CD4-positive, alpha-beta memory T cell (primary cell): ENCODE measurements at regions of chr3 and their contacts with region 1.

Region 1: DNA sequence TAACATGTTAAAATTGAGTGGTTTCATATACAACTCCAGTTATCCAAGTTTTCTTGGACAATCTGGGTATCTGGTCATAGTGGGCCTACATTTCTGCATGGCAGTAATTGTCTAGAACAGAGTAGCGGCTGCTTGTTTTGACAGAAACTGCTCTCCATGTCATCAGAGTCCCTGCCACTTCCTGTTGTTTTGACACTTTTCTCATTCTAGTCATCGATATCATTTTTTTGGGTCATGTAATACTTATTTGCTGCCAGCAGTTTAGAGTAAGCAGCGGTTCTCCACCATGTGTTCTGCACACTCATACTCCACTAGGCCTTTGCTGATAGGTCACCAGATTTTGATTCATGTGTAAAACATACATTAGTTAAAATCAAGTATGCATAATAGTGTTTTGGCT is 81.5 kb downstream of the SLC25A26 start:
- DNase-seq: peak; percentile 81 to 88 (median 83)
- H3K4me3 ChIP-seq: no peak overlapping the region
- H3K4me3 Mint-ChIP-seq: peak overlapping the region in 7 of 8 donors; percentile 11 to 79 (median 68)
- H3K27ac ChIP-seq: peak overlapping the region; percentile 73
- H3K27ac Mint-ChIP-seq: peak overlapping the region in 3 of 7 donors; percentile 97 to 99 (median 98)
- H3K4me1 ChIP-seq: peaks cover 93% of the 10 kb centered on the region
- H3K4me1 Mint-ChIP-seq: peaks cover 22 to 71% (median 43%) of the 10 kb centered on the region in 4 donors
- H3K27me3 ChIP-seq: no peaks in the 10 kb centered on the region
- H3K27me3 Mint-ChIP-seq: no peaks in the 10 kb centered on the region

Region 2: DNA sequence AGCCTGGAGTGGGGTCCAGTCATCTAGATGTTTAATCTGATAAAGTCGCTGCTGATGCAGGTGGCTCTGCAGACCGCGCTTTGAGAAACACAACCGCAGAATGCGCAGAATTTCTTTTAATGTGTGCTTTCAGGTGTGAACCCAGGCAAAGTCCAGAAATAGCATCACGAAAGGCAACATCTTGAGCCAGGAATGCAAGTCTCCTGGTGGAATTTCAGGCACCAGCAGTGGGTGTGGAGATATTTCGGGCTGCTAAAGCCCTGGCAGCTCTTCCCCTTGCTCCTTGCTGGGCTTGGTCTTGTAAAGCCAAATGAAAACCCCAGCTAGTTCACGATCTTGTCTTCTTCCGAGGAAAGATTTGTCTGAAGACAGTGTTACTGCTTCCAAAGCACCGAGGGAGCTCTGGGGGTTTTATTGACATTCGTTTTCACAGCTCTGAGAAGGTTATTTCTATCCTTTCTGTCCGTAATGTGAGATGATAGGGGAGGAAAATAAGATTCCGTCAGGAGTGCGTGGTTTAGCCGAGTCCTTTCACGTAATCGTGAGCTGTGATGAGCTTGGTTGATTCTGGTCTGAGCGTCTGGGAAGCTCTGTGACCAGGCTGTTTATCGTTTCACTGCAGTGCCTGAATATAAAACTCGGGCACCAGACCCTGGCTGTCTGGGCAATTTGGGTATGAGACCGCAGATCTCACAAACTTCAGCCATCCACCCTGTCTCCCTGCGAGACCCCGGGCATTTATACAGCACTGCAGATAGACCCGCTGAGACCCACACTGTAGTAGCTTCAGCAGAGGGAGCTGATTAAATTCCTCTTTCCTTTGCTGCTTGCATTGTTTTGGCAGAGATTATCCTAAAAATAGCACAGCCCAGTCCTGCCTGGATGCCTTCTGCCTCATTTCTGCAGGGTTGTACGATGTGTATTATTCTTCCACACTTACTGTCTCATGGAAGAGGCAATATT is 148.5 kb before region 1 on chr3:
- CTCF ChIA-PET with region 1: no interaction called
- POLR2A ChIA-PET with region 1: no interaction called
- intact Hi-C with region 1: no loop called
- DNase-seq: no peak
- H3K4me3 ChIP-seq: no peak overlapping the region
- H3K4me3 Mint-ChIP-seq: no peak overlapping the region
- H3K27ac ChIP-seq: no peak overlapping the region
- H3K27ac Mint-ChIP-seq: no peak overlapping the region
- H3K4me1 ChIP-seq: no peaks in the 10 kb centered on the region
- H3K4me1 Mint-ChIP-seq: no peaks in the 10 kb centered on the region
- H3K27me3 ChIP-seq: no peaks in the 10 kb centered on the region
- H3K27me3 Mint-ChIP-seq: peaks cover 4 to 5% of the 10 kb centered on the region in 2 donors

Region 3: GRCh38 chr3:66220602-66221377 is 81.5 kb before region 1 on chr3 and contains the start of gene SLC25A26:
- CTCF ChIA-PET with region 1: no interaction called
- POLR2A ChIA-PET with region 1: interaction called, 3 read pairs
- intact Hi-C with region 1: loop called (anchors 1 kb)
- DNase-seq: peak; percentile 96 to 100 (median 98)
- H3K4me3 ChIP-seq: peak within 1 kb of the TSS; percentile 67 to 82
- H3K4me3 Mint-ChIP-seq: peak within 1 kb of the TSS; percentile 87 to 99 (median 92)
- H3K27ac ChIP-seq: peak within 1 kb of the TSS; percentile 73
- H3K27ac Mint-ChIP-seq: peak within 1 kb of the TSS; percentile 76 to 99 (median 91)
- H3K4me1 ChIP-seq: peaks cover 15% of the 10 kb centered on the region
- H3K4me1 Mint-ChIP-seq: peaks cover 16 to 44% (median 32%) of the 10 kb centered on the region in 4 donors
- H3K27me3 ChIP-seq: no peaks in the 10 kb centered on the region
- H3K27me3 Mint-ChIP-seq: no peaks in the 10 kb centered on the region
- total RNA-seq, gene SLC25A26: 18.9 to 21.1 TPM

Region 4: GRCh38 chr3:66276705-66277274 is 25.5 kb before region 1 on chr3:
- CTCF ChIA-PET with region 1: interaction called, 13 read pairs
- POLR2A ChIA-PET with region 1: interaction called, 32 read pairs
- intact Hi-C with region 1: loop called (anchors 2 kb)
- DNase-seq: peak; percentile 71 to 75 (median 73)
- H3K4me3 ChIP-seq: no peak overlapping the region
- H3K4me3 Mint-ChIP-seq: no peak overlapping the region
- H3K27ac ChIP-seq: no peak overlapping the region
- H3K27ac Mint-ChIP-seq: peak overlapping the region; percentile 6 to 86 (median 71)
- H3K4me1 ChIP-seq: peaks cover 34% of the 10 kb centered on the region
- H3K4me1 Mint-ChIP-seq: peaks cover 25 to 45% (median 34%) of the 10 kb centered on the region in 4 donors
- H3K27me3 ChIP-seq: no peaks in the 10 kb centered on the region
- H3K27me3 Mint-ChIP-seq: no peaks in the 10 kb centered on the region

Region 5: GRCh38 chr3:66344848-66345578 is 42.7 kb after region 1 on chr3:
- CTCF ChIA-PET with region 1: no interaction called
- POLR2A ChIA-PET with region 1: no interaction called
- intact Hi-C with region 1: loop called (anchors 5 kb)
- DNase-seq: no peak
- H3K4me3 ChIP-seq: no peak overlapping the region
- H3K4me3 Mint-ChIP-seq: no peak overlapping the region
- H3K27ac ChIP-seq: no peak overlapping the region
- H3K27ac Mint-ChIP-seq: peak overlapping the region in 5 of 7 donors; percentile 26 to 89 (median 41)
- H3K4me1 ChIP-seq: no peaks in the 10 kb centered on the region
- H3K4me1 Mint-ChIP-seq: peaks cover 2 to 11% (median 4%) of the 10 kb centered on the region in 4 donors
- H3K27me3 ChIP-seq: no peaks in the 10 kb centered on the region
- H3K27me3 Mint-ChIP-seq: no peaks in the 10 kb centered on the region

Region 6: GRCh38 chr3:66355394-66355793 is 53.1 kb after region 1 on chr3:
- CTCF ChIA-PET with region 1: interaction called, 3 read pairs
- POLR2A ChIA-PET with region 1: interaction called, 12 read pairs
- intact Hi-C with region 1: no loop called
- DNase-seq: no peak
- H3K4me3 ChIP-seq: no peak overlapping the region
- H3K4me3 Mint-ChIP-seq: no peak overlapping the region
- H3K27ac ChIP-seq: no peak overlapping the region
- H3K27ac Mint-ChIP-seq: no peak overlapping the region
- H3K4me1 ChIP-seq: peaks cover 22% of the 10 kb centered on the region
- H3K4me1 Mint-ChIP-seq: peaks cover 0 to 17% (median 13%) of the 10 kb centered on the region in 4 donors
- H3K27me3 ChIP-seq: no peaks in the 10 kb centered on the region
- H3K27me3 Mint-ChIP-seq: no peaks in the 10 kb centered on the region

Region 7: DNA sequence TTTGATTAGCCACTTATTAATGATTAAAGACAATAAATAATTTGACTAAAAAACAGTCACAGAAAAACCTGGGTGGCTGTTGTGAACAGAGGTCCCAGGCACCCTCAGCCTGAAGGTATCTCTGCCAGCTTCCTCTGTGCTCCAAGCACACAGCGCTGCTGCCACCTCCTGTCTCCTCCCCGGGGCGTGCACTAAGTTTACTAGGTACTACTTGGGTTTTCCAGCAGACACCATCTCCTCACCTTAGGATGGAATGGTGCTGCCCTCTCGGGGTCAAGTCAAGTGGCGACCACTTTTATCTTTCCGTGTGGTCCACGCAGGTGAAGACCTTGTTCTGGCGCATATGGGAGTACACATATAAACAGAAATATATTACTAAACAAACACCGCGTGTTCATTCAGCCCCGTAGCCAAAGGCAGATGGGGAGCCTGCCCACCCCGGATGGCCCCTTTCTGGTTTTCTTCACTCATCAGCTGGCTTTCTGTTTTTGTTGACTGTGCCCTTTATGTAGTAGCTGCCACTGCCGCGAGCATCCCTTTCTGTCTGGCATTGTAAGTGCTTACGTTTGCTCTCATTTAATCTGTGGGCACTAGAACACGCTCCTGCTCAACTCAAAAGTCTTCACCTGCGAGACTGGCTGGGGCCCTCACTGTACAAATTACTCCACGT is 70.5 kb after region 1 on chr3:
- CTCF ChIA-PET with region 1: interaction called, 32 read pairs
- POLR2A ChIA-PET with region 1: interaction called, 38 read pairs
- intact Hi-C with region 1: loop called (anchors 1 kb)
- DNase-seq: peak; percentile 35 to 56 (median 44)
- H3K4me3 ChIP-seq: no peak overlapping the region
- H3K4me3 Mint-ChIP-seq: no peak overlapping the region
- H3K27ac ChIP-seq: no peak overlapping the region
- H3K27ac Mint-ChIP-seq: peak overlapping the region in 6 of 7 donors; percentile 36 to 82 (median 74)
- H3K4me1 ChIP-seq: peaks cover 13% of the 10 kb centered on the region
- H3K4me1 Mint-ChIP-seq: peaks cover 18 to 45% (median 19%) of the 10 kb centered on the region in 4 donors
- H3K27me3 ChIP-seq: no peaks in the 10 kb centered on the region
- H3K27me3 Mint-ChIP-seq: no peaks in the 10 kb centered on the region

Region 8: DNA sequence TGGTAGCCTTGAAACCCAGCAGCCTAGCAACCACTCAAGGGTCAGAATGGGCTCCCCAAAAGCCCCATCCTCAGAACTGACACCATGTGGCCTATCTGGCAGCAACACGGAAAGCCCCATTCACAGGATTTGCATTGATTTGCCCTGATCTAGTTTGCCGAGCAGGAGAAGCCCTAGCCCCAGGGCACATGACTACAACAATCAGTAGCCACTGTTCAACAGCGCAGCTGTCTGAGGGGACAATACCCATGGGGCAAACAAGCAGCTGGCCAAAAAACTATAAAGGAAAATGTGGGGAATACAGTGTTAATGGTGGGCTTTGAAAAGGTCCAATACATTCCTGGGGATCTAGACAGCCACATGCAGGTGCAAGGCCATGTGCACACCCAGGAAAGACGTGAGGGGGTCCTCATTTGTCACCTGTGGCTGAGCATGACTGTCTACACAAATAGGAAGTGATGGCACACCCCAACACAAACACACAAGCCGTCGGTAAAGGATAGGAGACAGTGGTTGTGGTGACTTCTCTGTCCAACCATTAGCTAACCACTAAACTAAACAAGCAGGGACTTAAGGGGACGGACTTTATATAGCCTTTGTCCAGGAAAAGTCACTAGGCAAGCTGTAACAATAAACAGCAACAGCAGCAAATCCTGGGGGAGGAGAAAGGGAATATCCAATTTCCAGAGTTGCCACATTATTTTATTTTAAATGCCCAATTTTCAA is 84.8 kb after region 1 on chr3:
- CTCF ChIA-PET with region 1: no interaction called
- POLR2A ChIA-PET with region 1: interaction called, 12 read pairs
- intact Hi-C with region 1: loop called (anchors 2 kb)
- DNase-seq: no peak
- H3K4me3 ChIP-seq: no peak overlapping the region
- H3K4me3 Mint-ChIP-seq: peak overlapping the region in 1 of 8 donors; percentile 48
- H3K27ac ChIP-seq: no peak overlapping the region
- H3K27ac Mint-ChIP-seq: peak overlapping the region in 5 of 7 donors; percentile 41 to 68 (median 66)
- H3K4me1 ChIP-seq: peaks cover 38% of the 10 kb centered on the region
- H3K4me1 Mint-ChIP-seq: peaks cover 32 to 62% (median 41%) of the 10 kb centered on the region in 4 donors
- H3K27me3 ChIP-seq: no peaks in the 10 kb centered on the region
- H3K27me3 Mint-ChIP-seq: no peaks in the 10 kb centered on the region